Activated CD8-positive, alpha-beta T cell treated with anti-CD3 and anti-CD28 coated beads, Interleukin-2, amount 10 ng/mL, durations not matched to agents 7 days and 5 days (primary cell): ENCODE measurements at regions of chr1 and their contacts with region 1.

Region 1: GRCh38 chr1:23403735-23404486 is 20.6 kb downstream of the TCEA3 start:
- DNase-seq: peak; percentile 90
- ATAC-seq: peak; percentile 95
- H3K4me3 Mint-ChIP-seq: no peak overlapping the region
- H3K27ac Mint-ChIP-seq: no peak overlapping the region
- H3K4me1 Mint-ChIP-seq: peaks cover 11% of the 10 kb centered on the region
- H3K27me3 Mint-ChIP-seq: no peaks in the 10 kb centered on the region

Region 2: DNA sequence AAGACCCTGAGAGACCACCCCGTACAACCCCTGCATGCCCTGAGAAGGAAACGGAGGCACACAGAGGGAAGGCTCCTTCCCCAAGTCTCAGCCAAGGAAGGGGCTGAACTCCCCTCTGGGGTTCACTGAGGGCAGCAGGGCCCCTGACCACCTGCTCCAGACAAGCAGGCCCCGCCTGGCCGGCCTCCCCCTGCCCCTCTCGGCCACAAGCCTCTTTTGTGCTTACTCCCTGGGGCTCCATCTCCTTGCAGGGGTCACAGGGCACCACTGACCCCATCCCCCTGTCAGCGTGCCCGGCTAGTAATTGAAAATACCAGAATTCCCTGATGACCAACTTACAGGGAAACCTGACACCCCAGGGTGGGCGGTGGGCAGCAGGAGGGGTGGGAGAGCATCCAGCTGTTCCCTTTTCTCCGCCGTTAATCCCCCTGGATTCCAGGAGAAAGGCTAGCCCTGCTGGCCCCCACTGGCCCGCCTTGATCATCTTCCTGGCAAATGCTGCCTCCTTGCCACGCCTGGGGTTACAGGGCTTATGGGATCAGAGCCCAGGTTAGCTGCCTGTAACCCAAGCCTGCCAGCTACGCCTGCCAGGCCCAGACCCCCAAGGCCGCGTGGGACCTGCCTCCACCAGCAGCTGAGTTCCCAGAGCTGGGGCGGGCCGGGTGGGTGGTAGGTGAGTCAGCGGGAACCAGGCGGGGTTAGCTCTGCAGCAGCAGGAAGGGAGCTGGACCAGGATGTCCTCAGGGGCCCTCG is 527.4 kb before region 1 on chr1:
- CTCF ChIA-PET with region 1: no interaction called
- POLR2A ChIA-PET with region 1: no interaction called
- DNase-seq: no peak
- ATAC-seq: no peak
- H3K4me3 Mint-ChIP-seq: no peak overlapping the region
- H3K27ac Mint-ChIP-seq: no peak overlapping the region
- H3K4me1 Mint-ChIP-seq: peaks cover 4% of the 10 kb centered on the region
- H3K27me3 Mint-ChIP-seq: peaks cover 2% of the 10 kb centered on the region

Region 3: GRCh38 chr1:23337869-23338268 is 66.0 kb before region 1 on chr1:
- CTCF ChIA-PET with region 1: interaction called, 13 read pairs
- POLR2A ChIA-PET with region 1: no interaction called
- DNase-seq: peak; percentile 4
- ATAC-seq: no peak
- H3K4me3 Mint-ChIP-seq: no peak overlapping the region
- H3K27ac Mint-ChIP-seq: peak overlapping the region; percentile 21
- H3K4me1 Mint-ChIP-seq: peaks cover 54% of the 10 kb centered on the region
- H3K27me3 Mint-ChIP-seq: no peaks in the 10 kb centered on the region

Region 4: GRCh38 chr1:23344111-23344986 is 59.6 kb before region 1 on chr1 and contains the start of gene HNRNPR:
- CTCF ChIA-PET with region 1: interaction called, 13 read pairs
- POLR2A ChIA-PET with region 1: interaction called, 3 read pairs
- DNase-seq: peak; percentile 100
- ATAC-seq: peak; percentile 99
- H3K4me3 Mint-ChIP-seq: peak within 1 kb of the TSS; percentile 86
- H3K27ac Mint-ChIP-seq: peak within 1 kb of the TSS; percentile 94
- H3K4me1 Mint-ChIP-seq: peaks cover 34% of the 10 kb centered on the region
- H3K27me3 Mint-ChIP-seq: no peaks in the 10 kb centered on the region
- total RNA-seq, gene HNRNPR: 217 to 231 TPM

Region 5: DNA sequence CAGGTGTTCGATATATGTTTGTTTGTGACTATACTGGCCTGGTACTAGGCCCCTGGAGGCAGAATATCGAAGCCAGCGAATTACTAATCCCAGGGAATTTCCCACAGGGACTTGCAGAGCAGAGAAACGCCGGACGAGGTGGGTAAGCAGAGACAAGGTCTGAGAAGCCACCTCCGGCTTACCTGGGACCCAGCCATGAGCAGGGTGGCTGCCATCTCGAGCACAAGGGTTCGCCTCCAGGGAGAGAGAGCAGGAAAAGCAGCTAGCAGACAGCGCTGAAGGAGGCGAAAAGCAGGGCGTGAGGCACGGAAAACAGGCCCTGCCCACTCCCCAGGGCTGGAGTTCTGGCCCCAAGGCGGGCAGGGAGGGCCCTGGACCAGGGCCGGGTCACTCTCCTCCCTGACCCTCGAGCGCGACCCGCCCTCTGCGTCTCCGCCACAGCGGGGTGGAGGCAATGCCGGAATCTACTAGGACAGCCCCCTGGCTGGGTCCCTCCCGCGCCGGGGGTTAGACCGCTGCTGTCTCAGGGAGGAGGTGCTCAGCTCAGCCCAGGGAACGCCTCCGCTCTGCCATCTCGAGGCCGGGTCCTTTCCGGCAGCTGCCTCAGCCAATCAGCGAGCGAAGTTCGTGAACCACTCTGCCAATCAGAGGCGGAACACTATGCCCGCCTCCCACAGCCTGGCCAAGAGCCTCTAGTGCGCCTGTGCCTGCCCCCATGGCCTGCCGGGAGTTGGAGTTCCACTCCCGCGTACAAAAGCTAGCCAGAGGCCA is 35.9 kb before region 1 on chr1:
- CTCF ChIA-PET with region 1: interaction called, 10 read pairs
- POLR2A ChIA-PET with region 1: interaction called, 4 read pairs
- DNase-seq: peak; percentile 99
- ATAC-seq: peak; percentile 94
- H3K4me3 Mint-ChIP-seq: peak overlapping the region; percentile 92
- H3K27ac Mint-ChIP-seq: peak overlapping the region; percentile 97
- H3K4me1 Mint-ChIP-seq: peaks cover 36% of the 10 kb centered on the region
- H3K27me3 Mint-ChIP-seq: no peaks in the 10 kb centered on the region

Region 6: DNA sequence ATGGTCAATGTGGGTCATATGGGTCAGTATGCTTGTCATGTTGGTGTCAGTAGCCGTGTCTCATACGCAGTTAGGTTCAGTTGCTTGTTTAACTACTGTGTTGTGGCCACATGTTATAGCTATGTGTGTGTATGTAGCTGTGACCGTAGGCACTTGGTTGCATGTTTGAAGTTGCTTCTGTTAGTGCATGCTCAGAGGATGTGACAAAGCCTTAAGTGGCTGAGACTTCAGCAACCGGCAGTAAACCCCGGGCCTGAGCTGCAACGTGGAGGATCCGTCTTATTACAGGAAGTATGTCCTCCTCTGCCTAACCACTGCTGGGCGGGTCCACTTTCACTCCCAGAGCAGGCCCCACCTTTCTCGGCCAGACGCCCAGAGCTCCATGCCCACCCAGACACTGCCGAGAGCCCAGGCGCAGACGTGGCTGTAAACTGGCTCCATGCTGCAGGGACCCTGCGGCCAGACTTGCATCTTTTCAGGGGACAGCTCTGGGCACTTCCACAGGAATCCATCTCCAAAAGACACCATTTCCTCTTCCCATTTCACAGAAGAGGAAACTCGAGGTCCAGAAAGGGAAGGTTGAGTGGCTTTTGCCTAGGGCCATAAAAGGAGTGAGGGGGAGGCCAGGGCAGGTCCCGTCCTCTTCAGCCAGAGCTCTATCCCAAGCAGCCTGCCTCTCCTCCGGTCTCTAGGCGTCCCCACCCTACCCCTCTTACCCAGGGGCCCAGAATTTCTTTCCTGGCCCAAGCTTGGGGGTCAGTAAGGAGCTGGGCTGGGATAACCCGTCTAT is 18.5 kb after region 1 on chr1:
- CTCF ChIA-PET with region 1: interaction called, 21 read pairs
- POLR2A ChIA-PET with region 1: interaction called, 5 read pairs
- DNase-seq: peak; percentile 83
- ATAC-seq: peak; percentile 84
- H3K4me3 Mint-ChIP-seq: peak overlapping the region; percentile 78
- H3K27ac Mint-ChIP-seq: peak overlapping the region; percentile 74
- H3K4me1 Mint-ChIP-seq: peaks cover 39% of the 10 kb centered on the region
- H3K27me3 Mint-ChIP-seq: peaks cover 25% of the 10 kb centered on the region

Region 7: GRCh38 chr1:23521588-23521987 is 117.7 kb after region 1 on chr1:
- CTCF ChIA-PET with region 1: no interaction called
- POLR2A ChIA-PET with region 1: no interaction called
- DNase-seq: no peak
- ATAC-seq: no peak
- H3K4me3 Mint-ChIP-seq: no peak overlapping the region
- H3K27ac Mint-ChIP-seq: no peak overlapping the region
- H3K4me1 Mint-ChIP-seq: peaks cover 47% of the 10 kb centered on the region
- H3K27me3 Mint-ChIP-seq: no peaks in the 10 kb centered on the region